ENCODE measurements at regions of chr20 and their contacts with region 1.

Region 1: GRCh38 chr20:1786486-1786885 is 108.7 kb upstream of the SIRPA start:
- DNase-seq: no peak
- H3K4me3 ChIP-seq: no peak overlapping the region
- H3K27ac ChIP-seq: no peak overlapping the region
- H3K4me1 ChIP-seq: no peaks in the 10 kb centered on the region
- H3K27me3 ChIP-seq: no peaks in the 10 kb centered on the region
- CTCF ChIP-seq: no peak
- POLR2A ChIP-seq: no peak

Region 2: GRCh38 chr20:2022163-2022562 is 235.7 kb after region 1 on chr20:
- intact Hi-C with region 1: loop called (anchors 5 kb)
- DNase-seq: no peak
- H3K4me3 ChIP-seq: no peak overlapping the region
- H3K27ac ChIP-seq: no peak overlapping the region
- H3K4me1 ChIP-seq: no peaks in the 10 kb centered on the region
- H3K27me3 ChIP-seq: peaks cover 0 to 5% of the 10 kb centered on the region in 2 donors
- CTCF ChIP-seq: no peak
- POLR2A ChIP-seq: no peak

Region 3: GRCh38 chr20:2131366-2131765 is 344.9 kb after region 1 on chr20:
- intact Hi-C with region 1: no loop called
- DNase-seq: no peak
- H3K4me3 ChIP-seq: no peak overlapping the region
- H3K27ac ChIP-seq: no peak overlapping the region
- H3K4me1 ChIP-seq: peaks cover 14 to 27% of the 10 kb centered on the region in 2 donors
- H3K27me3 ChIP-seq: no peaks in the 10 kb centered on the region
- CTCF ChIP-seq: no peak
- POLR2A ChIP-seq: no peak

Measured in breast epithelium (tissue), 4 donors.